PC-3 (cell line): ENCODE measurements at regions of chr9 and their contacts with region 1.

Region 1: DNA sequence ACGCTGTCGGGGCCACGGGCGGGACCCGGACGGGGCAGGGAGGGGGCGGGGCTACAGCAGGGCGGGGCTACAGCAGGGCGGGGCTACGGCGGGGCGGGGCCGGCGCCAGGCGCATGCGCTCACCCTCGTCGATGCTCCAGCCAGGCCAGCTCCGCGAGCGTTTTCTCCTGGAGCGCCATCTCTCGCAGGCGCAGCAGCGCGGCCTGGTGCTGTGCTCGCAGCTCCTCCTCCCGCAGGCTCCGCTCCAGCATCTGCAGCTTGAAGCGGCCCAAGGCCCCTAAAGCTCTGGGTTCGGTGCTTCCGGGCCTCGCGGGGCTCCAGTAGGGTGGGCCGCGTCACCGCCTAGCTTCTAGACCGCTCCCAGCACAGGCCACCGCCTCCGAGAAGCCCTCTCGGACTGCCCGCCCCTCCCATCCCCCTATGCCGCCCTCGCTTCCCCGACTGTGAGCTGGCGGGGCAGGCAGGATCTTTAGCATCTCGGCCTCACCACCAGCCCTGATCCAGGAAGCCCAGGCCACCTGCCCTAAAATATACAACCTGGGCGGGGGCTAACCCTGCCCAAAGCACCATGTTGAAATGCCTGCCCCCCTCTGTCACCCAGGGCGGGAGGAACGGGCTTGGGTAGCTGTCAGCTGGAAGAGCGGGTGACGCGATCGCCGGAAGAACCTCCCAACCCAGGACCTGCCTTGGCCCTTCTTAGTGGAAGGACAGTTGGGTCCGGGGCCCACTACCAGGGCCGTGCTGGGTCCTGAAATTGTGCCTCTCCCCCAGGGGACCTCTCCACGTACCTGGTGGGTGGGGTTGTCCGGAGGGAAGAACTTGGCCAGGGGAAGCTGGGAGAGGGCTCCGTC is 21.9 kb upstream of the QSOX2 start:
- DNase-seq: peak; percentile 75
- ATAC-seq: peak; percentile 94
- H3K4me3 ChIP-seq: peak overlapping the region; percentile 56
- H3K27ac ChIP-seq: no peak overlapping the region
- H3K4me1 ChIP-seq: no peaks in the 10 kb centered on the region
- H3K27me3 ChIP-seq: no peaks in the 10 kb centered on the region
- CTCF ChIP-seq: 0 out of 2 replicates have a peak, but pooled peaks have one; percentile 24

Region 2: GRCh38 chr9:136245219-136246150 is 22.0 kb before region 1 on chr9 and contains the start of gene QSOX2:
- CTCF ChIA-PET with region 1: no interaction called
- POLR2A ChIA-PET with region 1: no interaction called
- intact Hi-C with region 1: loop called (anchors 1 kb)
- DNase-seq: peak; percentile 59
- ATAC-seq: peak; percentile 75
- H3K4me3 ChIP-seq: peak within 1 kb of the TSS; percentile 80
- H3K27ac ChIP-seq: no peak within 1 kb of the TSS
- H3K4me1 ChIP-seq: peaks cover 19% of the 10 kb centered on the region
- H3K27me3 ChIP-seq: no peaks in the 10 kb centered on the region
- CTCF ChIP-seq: no peak
- total RNA-seq, gene QSOX2: 9.9 and 10.7 TPM in 2 replicates